ENCODE measurements at regions of chr1 and their contacts with region 1.

Region 1: GRCh38 chr1:44568135-44568900 is 106.0 kb downstream of the TMEM53 start:
- DNase-seq: peak in 1 of 2 donors; percentile 23
- ATAC-seq: no peak
- H3K4me3 ChIP-seq: no peak overlapping the region
- H3K27ac ChIP-seq: no peak overlapping the region
- H3K4me1 ChIP-seq: no peaks in the 10 kb centered on the region
- H3K27me3 ChIP-seq: no peaks in the 10 kb centered on the region

Region 2: GRCh38 chr1:43602990-43603389 is 965.3 kb before region 1 on chr1:
- intact Hi-C with region 1: loop called in 1 of 2 experiments (anchors 10 kb)
- DNase-seq: no peak
- ATAC-seq: no peak
- H3K4me3 ChIP-seq: no peak overlapping the region
- H3K27ac ChIP-seq: no peak overlapping the region
- H3K4me1 ChIP-seq: no peaks in the 10 kb centered on the region
- H3K27me3 ChIP-seq: no peaks in the 10 kb centered on the region

Measured in aorta (tissue), 5 donors.